Activated naive CD8-positive, alpha-beta T cell treated with anti-CD3 and anti-CD28 coated beads, Interleukin-2, amount 10 ng/mL, durations not matched to agents 7 days and 5 days (primary cell): ENCODE measurements at regions of chrX and their contacts with region 1.

Region 1: GRCh38 chrX:72276478-72276953 is 532 bp downstream of the RPS4X start:
- DNase-seq: no peak
- ATAC-seq: no peak
- H3K4me3 Mint-ChIP-seq: peak overlapping the region; percentile 82
- H3K27ac Mint-ChIP-seq: peak overlapping the region; percentile 89
- H3K4me1 Mint-ChIP-seq: peaks cover 31% of the 10 kb centered on the region
- H3K27me3 Mint-ChIP-seq: peaks cover 3% of the 10 kb centered on the region

Region 2: DNA sequence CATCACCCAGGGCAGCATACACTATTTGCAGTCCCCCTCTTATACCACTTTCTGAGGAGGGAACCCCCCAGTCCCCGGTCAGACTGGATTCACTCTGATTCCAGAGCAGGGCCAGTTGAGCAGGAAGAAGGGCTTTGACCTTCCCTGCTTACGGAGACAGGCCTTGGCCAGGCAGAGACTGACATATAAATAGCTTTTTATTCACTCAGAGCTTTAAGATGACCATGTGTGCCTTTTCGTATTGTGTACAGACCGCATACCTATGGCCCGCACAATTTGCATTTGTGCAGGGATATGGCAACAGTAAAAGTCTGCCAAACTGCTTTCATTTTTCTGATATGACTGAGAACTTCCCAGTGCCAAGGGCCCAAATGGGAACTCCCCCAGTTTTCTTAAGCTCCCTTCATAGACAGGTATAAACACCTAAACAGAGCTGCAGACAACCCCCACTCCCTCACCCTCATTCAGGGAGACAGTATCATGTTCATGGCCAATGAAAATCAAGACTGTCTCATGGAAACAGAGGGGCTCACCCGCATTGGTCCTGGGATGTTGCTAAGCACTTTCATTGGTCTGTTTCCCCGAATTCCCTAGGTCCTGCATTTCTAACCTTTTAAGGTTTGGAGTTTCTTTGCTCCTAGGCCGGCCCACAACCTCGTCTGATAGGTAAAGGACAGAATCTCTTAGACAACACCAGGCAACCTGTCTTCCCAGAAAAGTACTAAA is 230.8 kb before region 1 on chrX:
- POLR2A ChIA-PET with region 1: no interaction called
- DNase-seq: no peak
- ATAC-seq: no peak
- H3K4me3 Mint-ChIP-seq: no peak overlapping the region
- H3K27ac Mint-ChIP-seq: no peak overlapping the region
- H3K4me1 Mint-ChIP-seq: peaks cover 2% of the 10 kb centered on the region
- H3K27me3 Mint-ChIP-seq: peaks cover 6% of the 10 kb centered on the region

Region 3: DNA sequence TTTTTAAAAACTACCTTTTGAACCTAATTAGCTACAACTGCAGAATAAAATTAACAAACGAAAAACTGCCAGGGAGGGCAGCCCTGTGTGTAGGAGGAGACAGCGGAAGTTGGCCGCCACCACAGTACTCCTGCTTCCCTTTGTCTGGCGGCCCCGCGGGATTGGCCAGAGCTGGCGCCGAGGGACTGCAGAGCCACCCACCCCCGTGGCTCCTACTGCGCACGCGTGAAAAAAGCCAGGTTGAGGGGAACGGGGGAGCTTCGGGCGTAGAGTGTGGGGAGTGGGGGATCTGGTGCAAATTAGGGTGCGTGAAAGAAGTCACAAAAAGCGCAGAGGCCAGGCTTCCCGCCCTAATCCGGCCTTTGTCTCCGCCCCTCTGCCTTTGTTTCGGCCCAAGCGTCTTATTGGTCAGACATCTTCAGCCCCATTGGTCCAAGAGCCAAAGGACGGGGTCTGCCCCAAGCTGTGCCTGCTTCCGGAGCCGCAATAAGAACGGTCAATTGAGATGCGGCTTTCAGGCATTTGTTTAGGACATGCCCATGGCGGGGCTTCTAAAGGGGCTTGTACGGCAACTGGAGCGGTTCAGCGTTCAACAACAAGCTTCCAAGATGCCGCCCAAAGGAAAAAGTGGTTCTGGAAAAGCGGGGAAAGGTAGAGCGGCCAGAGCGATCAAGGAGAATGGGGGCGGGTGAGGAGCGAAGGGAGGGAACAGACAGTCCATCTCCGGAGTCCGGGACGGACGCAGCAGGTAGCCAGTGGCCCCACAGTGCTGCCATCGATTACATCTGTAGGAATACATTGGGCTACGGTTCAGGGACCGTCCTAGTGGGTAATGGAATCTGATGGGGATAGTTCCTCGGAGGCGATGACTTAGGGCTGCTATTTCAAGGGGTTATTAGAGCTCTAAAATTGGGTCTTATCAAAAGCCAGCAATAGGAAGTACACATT is 95.1 kb before region 1 on chrX and contains the start of gene PIN4:
- POLR2A ChIA-PET with region 1: interaction called, 13 read pairs
- DNase-seq: peak; percentile 76
- ATAC-seq: peak; percentile 92
- H3K4me3 Mint-ChIP-seq: no peak within 1 kb of the TSS
- H3K27ac Mint-ChIP-seq: no peak within 1 kb of the TSS
- H3K4me1 Mint-ChIP-seq: peaks cover 9% of the 10 kb centered on the region
- H3K27me3 Mint-ChIP-seq: no peaks in the 10 kb centered on the region
- total RNA-seq, gene PIN4: 9.3 to 9.5 TPM

Region 4: DNA sequence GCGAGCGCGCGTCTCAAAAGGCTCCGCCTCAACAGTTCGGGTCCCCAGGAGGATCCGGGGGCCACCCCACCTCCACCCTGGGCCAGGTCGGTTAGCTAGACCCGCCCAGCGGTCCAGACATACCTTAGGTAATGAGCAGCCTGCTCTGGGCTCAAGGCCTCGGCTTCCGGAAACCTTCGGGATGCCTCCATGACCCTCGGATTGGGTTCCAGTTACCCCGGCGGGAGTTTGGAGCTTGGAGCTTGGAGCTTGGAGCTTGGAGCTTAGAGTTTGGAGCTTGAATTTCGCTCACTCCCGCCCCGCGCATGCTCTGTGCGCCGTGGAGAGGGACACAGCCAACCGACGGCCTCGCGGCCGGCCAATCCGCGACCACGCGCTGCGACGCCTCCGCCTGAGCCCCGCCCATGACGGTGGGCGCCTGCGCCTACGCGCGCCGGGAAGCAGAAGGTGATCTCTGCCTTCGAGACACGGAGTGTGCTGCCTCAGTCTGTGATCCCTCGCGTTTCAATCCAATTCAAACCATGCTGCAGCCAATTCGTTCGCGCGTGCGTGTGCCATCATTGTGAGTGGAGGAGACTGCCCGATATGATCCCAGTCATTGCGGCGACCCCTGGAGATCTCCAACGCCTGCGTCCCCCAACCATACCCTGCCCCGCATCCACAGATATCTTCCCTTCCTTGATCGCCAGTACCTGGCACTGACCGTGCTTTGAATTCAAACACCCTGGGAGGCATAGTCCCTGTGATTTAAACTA is 37.6 kb before region 1 on chrX and contains the start of gene ERCC6L:
- POLR2A ChIA-PET with region 1: interaction called, 16 read pairs
- DNase-seq: peak; percentile 87
- ATAC-seq: peak; percentile 99
- H3K4me3 Mint-ChIP-seq: peak within 1 kb of the TSS; percentile 87
- H3K27ac Mint-ChIP-seq: peak within 1 kb of the TSS; percentile 64
- H3K4me1 Mint-ChIP-seq: peaks cover 13% of the 10 kb centered on the region
- H3K27me3 Mint-ChIP-seq: no peaks in the 10 kb centered on the region
- total RNA-seq, gene ERCC6L: 7.9 to 8.2 TPM